ENCODE measurements at regions of chr10 and their contacts with region 1.

Region 1: GRCh38 chr10:6920072-6921019 is 340.3 kb upstream of the PRKCQ start:
- DNase-seq: peak; percentile 61 to 87 (median 68)
- ATAC-seq: peak; percentile 100
- H3K4me3 ChIP-seq: no peak overlapping the region
- H3K4me3 Mint-ChIP-seq: no peak overlapping the region
- H3K27ac ChIP-seq: no peak overlapping the region
- H3K27ac Mint-ChIP-seq: no peak overlapping the region
- H3K4me1 ChIP-seq: peaks cover 8% of the 10 kb centered on the region
- H3K4me1 Mint-ChIP-seq: peaks cover 9% of the 10 kb centered on the region
- H3K27me3 ChIP-seq: no peaks in the 10 kb centered on the region
- H3K27me3 Mint-ChIP-seq: peaks cover 6% of the 10 kb centered on the region
- CTCF ChIP-seq: peak; percentile 70

Region 2: DNA sequence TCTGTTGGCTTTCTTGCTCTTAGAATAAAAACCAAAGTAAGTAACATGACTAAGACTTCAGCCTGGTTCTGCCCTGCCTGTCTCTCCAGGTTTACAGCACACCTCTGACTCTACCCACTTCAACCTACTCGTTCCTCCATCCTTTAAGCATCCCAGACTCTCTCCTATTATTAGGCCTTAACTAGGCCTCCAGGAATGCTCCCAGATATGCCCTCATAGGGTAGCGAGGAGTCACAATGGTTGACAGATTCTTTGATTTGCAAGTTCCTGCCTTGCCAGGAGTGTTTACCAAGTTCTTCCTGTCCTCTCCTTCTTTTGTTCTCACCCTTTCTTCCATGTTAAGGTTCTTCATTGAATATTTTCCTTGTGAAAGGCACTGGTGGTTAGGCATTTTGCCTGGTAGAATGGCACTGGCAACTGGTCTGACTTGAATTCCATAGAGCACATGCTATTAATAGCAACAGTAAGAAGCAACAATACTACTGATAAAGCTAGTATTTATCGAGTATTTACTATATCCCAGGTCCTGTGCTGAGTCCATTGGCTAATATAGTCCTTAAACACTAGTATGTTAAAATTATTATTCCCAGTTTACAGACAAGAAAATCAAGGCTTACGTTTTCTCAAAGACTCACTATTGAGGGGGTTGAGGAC is 12.3 kb before region 1 on chr10:
- CTCF ChIA-PET with region 1: no interaction called
- POLR2A ChIA-PET with region 1: no interaction called
- intact Hi-C with region 1: no loop called
- DNase-seq: no peak
- ATAC-seq: no peak
- H3K4me3 ChIP-seq: no peak overlapping the region
- H3K4me3 Mint-ChIP-seq: no peak overlapping the region
- H3K27ac ChIP-seq: no peak overlapping the region
- H3K27ac Mint-ChIP-seq: no peak overlapping the region
- H3K4me1 ChIP-seq: peaks cover 2% of the 10 kb centered on the region
- H3K4me1 Mint-ChIP-seq: no peaks in the 10 kb centered on the region
- H3K27me3 ChIP-seq: no peaks in the 10 kb centered on the region
- H3K27me3 Mint-ChIP-seq: no peaks in the 10 kb centered on the region
- CTCF ChIP-seq: no peak

Region 3: GRCh38 chr10:7121154-7121810 is 200.9 kb after region 1 on chr10:
- CTCF ChIA-PET with region 1: interaction called, 7 read pairs
- POLR2A ChIA-PET with region 1: no interaction called
- intact Hi-C with region 1: loop called in 1 of 2 experiments (anchors 5 kb)
- DNase-seq: peak; percentile 48 to 84 (median 61)
- ATAC-seq: peak; percentile 94
- H3K4me3 ChIP-seq: no peak overlapping the region
- H3K4me3 Mint-ChIP-seq: no peak overlapping the region
- H3K27ac ChIP-seq: no peak overlapping the region
- H3K27ac Mint-ChIP-seq: peak overlapping the region; percentile 65
- H3K4me1 ChIP-seq: peaks cover 7% of the 10 kb centered on the region
- H3K4me1 Mint-ChIP-seq: peaks cover 8% of the 10 kb centered on the region
- H3K27me3 ChIP-seq: no peaks in the 10 kb centered on the region
- H3K27me3 Mint-ChIP-seq: no peaks in the 10 kb centered on the region
- CTCF ChIP-seq: peak; percentile 82

Region 4: GRCh38 chr10:7260412-7260900 is 340.1 kb after region 1 on chr10:
- CTCF ChIA-PET with region 1: no interaction called
- POLR2A ChIA-PET with region 1: no interaction called
- intact Hi-C with region 1: loop called in 1 of 2 experiments (anchors 10 kb)
- DNase-seq: peak in 4 of 14 experiments; percentile 25 to 75 (median 68)
- ATAC-seq: peak; percentile 27
- H3K4me3 ChIP-seq: no peak overlapping the region
- H3K4me3 Mint-ChIP-seq: peak overlapping the region; percentile 30
- H3K27ac ChIP-seq: no peak overlapping the region
- H3K27ac Mint-ChIP-seq: peak overlapping the region; percentile 85
- H3K4me1 ChIP-seq: peaks cover 42% of the 10 kb centered on the region
- H3K4me1 Mint-ChIP-seq: peaks cover 59% of the 10 kb centered on the region
- H3K27me3 ChIP-seq: no peaks in the 10 kb centered on the region
- H3K27me3 Mint-ChIP-seq: no peaks in the 10 kb centered on the region
- CTCF ChIP-seq: peak; percentile 65

Region 5: GRCh38 chr10:7417103-7417623 is 496.8 kb after region 1 on chr10:
- CTCF ChIA-PET with region 1: interaction called, 10 read pairs
- POLR2A ChIA-PET with region 1: interaction called, 3 read pairs
- intact Hi-C with region 1: loop called (anchors 1 kb)
- DNase-seq: peak in 3 of 14 experiments; percentile 65 to 78 (median 74)
- ATAC-seq: peak; percentile 51
- H3K4me3 ChIP-seq: no peak overlapping the region
- H3K4me3 Mint-ChIP-seq: peak overlapping the region; percentile 54
- H3K27ac ChIP-seq: no peak overlapping the region
- H3K27ac Mint-ChIP-seq: peak overlapping the region; percentile 57
- H3K4me1 ChIP-seq: peaks cover 9% of the 10 kb centered on the region
- H3K4me1 Mint-ChIP-seq: peaks cover 18% of the 10 kb centered on the region
- H3K27me3 ChIP-seq: peaks cover 0 to 5% of the 10 kb centered on the region in 2 experiments
- H3K27me3 Mint-ChIP-seq: no peaks in the 10 kb centered on the region
- CTCF ChIP-seq: peak; percentile 77

Measured in CD4-positive, alpha-beta T cell (primary cell).